ENCODE measurements at regions of chr3 and their contacts with region 1.

Region 1: DNA sequence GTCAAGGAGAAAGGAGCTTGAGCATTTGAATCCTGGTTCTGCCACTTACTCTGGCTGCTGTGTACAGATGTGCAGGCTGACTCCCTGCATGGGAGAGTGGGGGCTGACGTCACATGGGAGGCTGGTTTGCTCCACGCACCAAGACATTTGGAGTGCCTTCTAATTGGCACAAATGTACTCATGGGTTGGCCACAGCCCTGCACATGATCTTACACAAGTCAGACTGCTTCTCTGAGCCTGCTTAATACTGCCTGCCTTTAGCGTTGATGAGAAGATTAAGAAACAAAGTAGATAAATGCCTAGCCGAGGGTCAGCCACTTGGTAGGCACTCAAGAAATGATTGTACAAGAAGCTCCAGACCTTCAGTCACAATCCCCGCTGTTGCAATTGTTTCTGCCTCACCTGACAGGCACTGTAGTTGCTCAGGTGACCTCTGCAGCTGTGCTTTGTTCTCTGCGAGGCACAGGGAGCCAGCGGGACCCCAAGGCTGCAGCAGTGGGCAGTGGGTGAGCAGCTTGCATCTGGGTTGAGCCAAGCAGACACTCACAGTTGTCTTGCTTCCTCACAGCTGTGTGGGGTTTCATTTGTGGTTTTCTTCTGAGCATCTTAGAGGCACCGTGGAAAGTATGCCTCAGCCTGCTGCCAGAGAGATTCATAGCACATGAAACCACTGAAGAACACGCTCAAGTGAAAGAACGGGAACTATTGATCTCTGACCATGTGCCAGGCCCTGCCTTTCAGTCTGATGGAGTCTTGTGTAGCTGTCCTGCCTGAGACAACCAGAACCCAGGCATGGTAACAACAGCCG is 33.1 kb downstream of the GRK7 start:
- DNase-seq: peak in 34 of 35 experiments; percentile 11 to 74 (median 37)
- ATAC-seq: peak; percentile 78 to 84 (median 79)
- H3K4me3 ChIP-seq: peak overlapping the region; percentile 54 to 70
- H3K4me3 Mint-ChIP-seq: peak overlapping the region; percentile 88 to 90 (median 89)
- H3K27ac ChIP-seq: peak overlapping the region; percentile 91
- H3K27ac Mint-ChIP-seq: peak overlapping the region; percentile 99 to 100
- H3K4me1 ChIP-seq: peaks cover 28 to 57% of the 10 kb centered on the region in 2 experiments
- H3K4me1 Mint-ChIP-seq: peaks cover 56 to 67% (median 57%) of the 10 kb centered on the region in 3 donors
- H3K27me3 ChIP-seq: no peaks in the 10 kb centered on the region
- H3K27me3 Mint-ChIP-seq: no peaks in the 10 kb centered on the region

Region 2: GRCh38 chr3:141729240-141729639 is 67.0 kb before region 1 on chr3:
- CTCF ChIA-PET with region 1: no interaction called
- POLR2A ChIA-PET with region 1: no interaction called
- DNase-seq: no peak
- ATAC-seq: no peak
- H3K4me3 ChIP-seq: no peak overlapping the region
- H3K4me3 Mint-ChIP-seq: no peak overlapping the region
- H3K27ac ChIP-seq: no peak overlapping the region
- H3K27ac Mint-ChIP-seq: no peak overlapping the region
- H3K4me1 ChIP-seq: no peaks in the 10 kb centered on the region
- H3K4me1 Mint-ChIP-seq: no peaks in the 10 kb centered on the region
- H3K27me3 ChIP-seq: peaks cover 0 to 7% of the 10 kb centered on the region in 2 experiments
- H3K27me3 Mint-ChIP-seq: peaks cover 2 to 4% of the 10 kb centered on the region in 2 donors

Region 3: DNA sequence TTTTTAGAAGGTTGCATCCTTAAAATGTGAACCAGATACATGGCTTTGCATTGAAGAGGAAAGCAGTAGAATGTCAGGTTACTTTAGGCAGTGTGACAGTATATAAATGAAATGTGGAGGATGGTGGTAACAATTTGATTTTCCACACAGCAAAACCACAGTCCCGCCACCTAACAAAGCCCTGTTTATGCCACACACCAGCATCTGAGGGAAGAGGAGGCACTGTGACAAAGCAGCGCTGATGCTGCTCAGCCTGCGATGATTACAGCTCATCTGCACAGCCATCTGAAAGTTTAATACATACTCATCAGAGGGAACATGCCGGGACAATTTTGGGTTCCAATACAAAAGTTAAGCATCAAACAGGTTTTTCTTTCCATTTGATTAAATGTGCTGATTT is 49.3 kb before region 1 on chr3:
- CTCF ChIA-PET with region 1: interaction called in 1 of 2 experiments, 3 read pairs
- POLR2A ChIA-PET with region 1: interaction called in 1 of 2 experiments, 11 read pairs
- DNase-seq: no peak
- ATAC-seq: no peak
- H3K4me3 ChIP-seq: no peak overlapping the region
- H3K4me3 Mint-ChIP-seq: no peak overlapping the region
- H3K27ac ChIP-seq: no peak overlapping the region
- H3K27ac Mint-ChIP-seq: no peak overlapping the region
- H3K4me1 ChIP-seq: peaks cover 6 to 7% of the 10 kb centered on the region in 2 experiments
- H3K4me1 Mint-ChIP-seq: peaks cover 22 to 29% (median 28%) of the 10 kb centered on the region in 3 donors
- H3K27me3 ChIP-seq: no peaks in the 10 kb centered on the region
- H3K27me3 Mint-ChIP-seq: no peaks in the 10 kb centered on the region

Region 4: DNA sequence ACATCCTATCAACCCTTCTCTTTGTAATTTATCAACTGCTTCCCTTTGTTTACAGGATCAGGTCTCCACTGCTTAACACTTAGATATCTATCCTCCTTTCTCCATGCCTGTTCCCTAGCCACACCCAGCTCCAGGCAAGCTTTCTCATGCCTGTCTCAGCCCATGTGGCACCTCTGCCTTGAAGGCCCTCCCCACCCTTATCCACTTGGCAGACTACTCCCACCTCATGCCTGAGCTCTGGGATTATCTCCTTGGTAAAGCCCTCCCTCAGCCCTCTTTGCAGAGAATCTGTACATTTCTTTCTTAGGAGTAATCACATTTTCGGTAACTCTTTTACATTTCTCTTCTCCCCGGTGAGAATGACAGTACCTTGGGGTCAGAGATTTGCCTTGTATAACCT is 176.1 kb after region 1 on chr3:
- CTCF ChIA-PET with region 1: no interaction called
- POLR2A ChIA-PET with region 1: no interaction called
- DNase-seq: no peak
- ATAC-seq: no peak
- H3K4me3 ChIP-seq: no peak overlapping the region
- H3K4me3 Mint-ChIP-seq: no peak overlapping the region
- H3K27ac ChIP-seq: no peak overlapping the region
- H3K27ac Mint-ChIP-seq: no peak overlapping the region
- H3K4me1 ChIP-seq: no peaks in the 10 kb centered on the region
- H3K4me1 Mint-ChIP-seq: no peaks in the 10 kb centered on the region
- H3K27me3 ChIP-seq: no peaks in the 10 kb centered on the region
- H3K27me3 Mint-ChIP-seq: no peaks in the 10 kb centered on the region

Region 5: GRCh38 chr3:141998669-141999290 is 202.5 kb after region 1 on chr3:
- CTCF ChIA-PET with region 1: no interaction called
- POLR2A ChIA-PET with region 1: no interaction called
- DNase-seq: peak in 1 of 35 experiments; percentile 27
- ATAC-seq: no peak
- H3K4me3 ChIP-seq: no peak overlapping the region
- H3K4me3 Mint-ChIP-seq: no peak overlapping the region
- H3K27ac ChIP-seq: no peak overlapping the region
- H3K27ac Mint-ChIP-seq: no peak overlapping the region
- H3K4me1 ChIP-seq: no peaks in the 10 kb centered on the region
- H3K4me1 Mint-ChIP-seq: no peaks in the 10 kb centered on the region
- H3K27me3 ChIP-seq: no peaks in the 10 kb centered on the region
- H3K27me3 Mint-ChIP-seq: no peaks in the 10 kb centered on the region

Region 6: DNA sequence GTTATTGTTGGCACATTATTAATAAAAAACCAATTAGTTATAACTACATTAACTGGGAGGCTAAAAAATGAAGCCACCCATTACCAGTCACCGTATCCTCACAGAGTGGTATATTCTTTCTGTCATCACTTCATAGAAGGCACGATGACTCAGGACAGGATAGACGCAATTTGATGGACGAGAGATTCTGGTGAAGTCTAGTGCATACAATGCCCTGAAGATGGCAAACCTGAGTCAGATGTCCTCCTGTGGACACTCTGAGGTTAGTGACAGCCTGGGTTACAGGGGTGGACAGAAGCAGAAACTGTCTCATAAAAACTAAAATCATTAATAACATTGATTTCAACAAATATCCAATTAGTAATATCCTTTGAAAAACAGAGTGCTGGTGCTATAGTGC is 1901.7 kb after region 1 on chr3:
- CTCF ChIA-PET with region 1: no interaction called
- POLR2A ChIA-PET with region 1: no interaction called
- DNase-seq: no peak
- ATAC-seq: no peak
- H3K4me3 ChIP-seq: no peak overlapping the region
- H3K4me3 Mint-ChIP-seq: no peak overlapping the region
- H3K27ac ChIP-seq: no peak overlapping the region
- H3K27ac Mint-ChIP-seq: no peak overlapping the region
- H3K4me1 ChIP-seq: no peaks in the 10 kb centered on the region
- H3K4me1 Mint-ChIP-seq: peaks cover 0 to 13% (median 4%) of the 10 kb centered on the region in 3 donors
- H3K27me3 ChIP-seq: no peaks in the 10 kb centered on the region
- H3K27me3 Mint-ChIP-seq: no peaks in the 10 kb centered on the region

Measured in T-cell (primary cell).